ENCODE measurements at regions of chr17 and their contacts with region 1.

Region 1: GRCh38 chr17:38557836-38558727 is 47.7 kb downstream of the SRCIN1 start:
- H3K4me3 ChIP-seq: peak overlapping the region; percentile 37
- H3K27ac ChIP-seq: no peak overlapping the region
- H3K4me1 ChIP-seq: peaks cover 15% of the 10 kb centered on the region
- CTCF ChIP-seq: peak; percentile 99

Region 2: DNA sequence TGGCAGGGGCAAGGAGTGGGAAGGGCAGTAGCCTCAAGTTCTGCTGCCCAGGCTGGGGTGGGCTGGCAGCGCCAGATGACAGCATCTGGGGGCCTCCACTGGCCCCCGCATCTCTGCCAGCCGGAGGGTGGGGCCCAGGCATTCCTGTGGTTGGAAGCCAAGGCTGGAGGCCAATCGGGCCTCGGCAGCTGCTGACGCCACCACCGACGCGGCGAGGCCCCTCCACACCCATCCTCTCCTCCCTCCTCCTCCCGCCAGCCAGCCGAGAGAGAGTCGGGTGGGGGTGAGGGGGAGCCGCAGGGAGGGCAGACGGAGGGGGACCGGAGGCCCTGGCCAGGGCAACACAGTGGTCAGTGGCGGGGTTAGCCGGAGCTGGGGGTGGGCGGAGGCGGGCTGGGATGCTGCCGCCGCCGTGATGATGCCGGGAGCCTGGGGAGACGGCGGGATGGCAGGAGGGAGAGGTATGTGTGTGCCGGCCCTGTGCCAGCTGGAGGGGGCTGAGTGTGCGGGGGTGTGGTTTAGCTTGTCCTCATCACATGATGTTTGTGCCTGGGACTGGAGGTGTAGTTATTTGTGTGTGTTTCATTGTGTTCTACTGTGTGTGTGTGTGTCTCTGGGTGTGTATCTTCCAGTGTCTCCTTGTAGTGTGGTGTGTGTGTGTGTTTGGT is 93.2 kb before region 1 on chr17:
- CTCF ChIA-PET with region 1: no interaction called
- POLR2A ChIA-PET with region 1: no interaction called
- H3K4me3 ChIP-seq: peak overlapping the region; percentile 65
- H3K27ac ChIP-seq: peak overlapping the region; percentile 37; the same call in 1 of the 2 replicates
- H3K4me1 ChIP-seq: peaks cover 11% of the 10 kb centered on the region
- CTCF ChIP-seq: no peak

Region 3: GRCh38 chr17:38539386-38539785 is 18.7 kb before region 1 on chr17:
- CTCF ChIA-PET with region 1: interaction called, 39 read pairs
- POLR2A ChIA-PET with region 1: interaction called, 3 read pairs
- H3K4me3 ChIP-seq: no peak overlapping the region
- H3K27ac ChIP-seq: no peak overlapping the region
- H3K4me1 ChIP-seq: no peaks in the 10 kb centered on the region
- CTCF ChIP-seq: no peak

Region 4: GRCh38 chr17:38572669-38573365 is 14.7 kb after region 1 on chr17:
- CTCF ChIA-PET with region 1: interaction called, 26 read pairs
- POLR2A ChIA-PET with region 1: interaction called, 6 read pairs
- H3K4me3 ChIP-seq: peak overlapping the region; percentile 37
- H3K27ac ChIP-seq: no peak overlapping the region
- H3K4me1 ChIP-seq: peaks cover 7% of the 10 kb centered on the region; the same call in 1 of the 2 replicates
- CTCF ChIP-seq: no peak

Region 5: DNA sequence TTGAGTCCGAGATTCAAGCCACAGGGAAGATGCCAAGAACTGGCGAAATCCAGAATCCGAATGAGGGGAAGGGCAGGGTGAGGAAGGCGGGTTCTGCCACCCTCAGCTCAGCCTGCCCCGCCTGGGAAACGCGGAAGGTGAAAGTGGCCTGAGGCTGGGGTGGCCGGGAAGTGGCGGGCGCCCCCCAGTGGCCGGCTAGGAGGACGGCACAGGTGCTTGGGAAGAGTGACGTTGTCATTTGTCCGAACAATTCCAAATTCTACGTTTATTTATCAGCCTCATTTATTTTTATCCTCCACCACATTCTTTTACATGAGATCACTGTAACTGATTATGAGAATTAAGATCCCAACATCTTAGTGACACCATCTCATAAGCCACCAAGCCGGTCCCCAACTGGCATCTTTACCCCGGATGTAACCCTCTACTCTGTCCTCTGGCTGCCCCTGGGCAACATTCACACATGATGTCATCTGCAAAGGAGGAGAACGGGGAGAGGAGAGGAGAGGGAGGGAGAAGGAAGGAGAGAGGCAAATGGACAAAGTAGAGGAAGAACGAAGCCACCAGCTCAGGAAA is 26.4 kb after region 1 on chr17:
- CTCF ChIA-PET with region 1: interaction called, 264 read pairs
- POLR2A ChIA-PET with region 1: interaction called, 14 read pairs
- H3K4me3 ChIP-seq: peak overlapping the region; percentile 21
- H3K27ac ChIP-seq: no peak overlapping the region
- H3K4me1 ChIP-seq: peaks cover 16% of the 10 kb centered on the region
- CTCF ChIP-seq: peak; percentile 86

Region 6: DNA sequence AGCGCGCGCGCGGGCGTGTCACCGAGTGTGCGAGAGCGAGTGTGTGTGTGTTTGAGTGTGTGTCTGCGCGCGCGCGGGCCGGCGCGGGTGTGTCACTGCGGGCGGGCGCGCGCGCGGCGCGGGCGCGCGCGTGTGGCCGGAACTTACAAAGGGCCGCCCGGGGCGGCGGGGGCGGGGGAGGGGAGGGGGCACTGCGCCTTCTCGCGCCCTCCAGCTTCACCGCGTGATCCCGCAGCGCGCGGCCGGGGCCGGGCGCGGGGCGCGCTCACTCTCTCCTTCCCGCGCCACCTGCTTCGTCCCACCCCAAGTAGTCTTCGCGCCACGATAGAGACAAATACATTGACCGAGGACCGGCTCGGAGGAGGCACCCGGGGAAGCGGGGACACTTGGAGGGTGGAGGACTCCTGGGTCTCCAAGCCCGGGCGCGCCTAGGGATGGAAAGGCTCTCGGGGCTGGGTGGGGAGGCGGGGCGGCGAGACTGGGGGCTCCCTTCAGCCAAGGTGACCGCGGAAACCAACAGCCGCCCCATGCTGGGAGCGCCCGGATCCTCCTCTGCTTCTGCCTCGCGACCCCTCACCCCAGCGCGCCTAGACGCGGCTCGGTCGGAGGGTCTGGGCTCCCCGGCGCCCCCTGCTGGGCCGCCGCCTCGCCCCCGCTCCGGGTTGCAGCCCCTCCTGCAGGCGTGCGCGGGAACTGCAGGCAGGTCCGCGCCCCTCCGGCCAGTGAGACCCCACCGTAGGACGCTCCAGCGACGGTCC is 48.0 kb after region 1 on chr17 and contains the start of gene SRCIN1:
- CTCF ChIA-PET with region 1: interaction called, 60 read pairs
- POLR2A ChIA-PET with region 1: interaction called, 7 read pairs
- H3K4me3 ChIP-seq: peak within 1 kb of the TSS; percentile 60
- H3K27ac ChIP-seq: peak within 1 kb of the TSS; percentile 46; the same call in 1 of the 2 replicates
- H3K4me1 ChIP-seq: peaks cover 15% of the 10 kb centered on the region
- CTCF ChIP-seq: peak; percentile 98

Region 7: GRCh38 chr17:38735161-38735997 is 177.3 kb after region 1 on chr17:
- CTCF ChIA-PET with region 1: interaction called, 21 read pairs
- POLR2A ChIA-PET with region 1: no interaction called
- H3K4me3 ChIP-seq: no peak overlapping the region
- H3K27ac ChIP-seq: no peak overlapping the region
- H3K4me1 ChIP-seq: peaks cover 5% of the 10 kb centered on the region
- CTCF ChIP-seq: peak; percentile 92